ENCODE measurements at regions of chr7 and their contacts with region 1.

Region 1: DNA sequence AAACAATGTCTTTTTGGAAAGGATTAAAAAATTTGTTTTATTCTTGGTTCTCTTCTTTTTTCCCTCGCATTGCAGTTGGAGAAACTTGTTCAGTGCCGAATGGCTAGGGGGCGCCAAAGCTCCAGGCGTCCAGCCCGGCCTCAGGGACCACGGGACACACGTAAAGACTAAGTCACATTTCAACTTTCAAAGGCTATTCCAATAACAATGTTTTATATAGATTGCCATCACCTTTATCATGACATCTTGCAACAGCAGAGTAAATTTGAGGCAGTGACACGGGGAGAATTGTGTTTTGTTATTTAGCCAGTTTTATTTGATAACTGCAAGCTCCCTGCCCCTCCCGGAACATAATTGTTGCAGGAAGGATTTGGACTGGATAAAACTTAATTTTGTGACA is 2.2 kb upstream of the IGFBP3 start:
- DNase-seq: peak; percentile 73
- H3K4me3 ChIP-seq: peak overlapping the region in 1 of 3 experiments; percentile 52
- H3K27ac ChIP-seq: no peak overlapping the region
- H3K4me1 ChIP-seq: peaks cover 28% of the 10 kb centered on the region
- H3K27me3 ChIP-seq: peaks cover 31 to 51% of the 10 kb centered on the region in 2 experiments
- CTCF ChIP-seq: peak; percentile 88 to 89
- POLR2A ChIP-seq: no peak

Region 2: GRCh38 chr7:45938626-45939302 is 15.5 kb after region 1 on chr7:
- CTCF ChIA-PET with region 1: interaction called, 12 read pairs
- POLR2A ChIA-PET with region 1: no interaction called
- dilution Hi-C with region 1: no loop called
- intact Hi-C with region 1: no loop called
- DNase-seq: no peak
- H3K4me3 ChIP-seq: no peak overlapping the region
- H3K27ac ChIP-seq: no peak overlapping the region
- H3K4me1 ChIP-seq: no peaks in the 10 kb centered on the region
- H3K27me3 ChIP-seq: no peaks in the 10 kb centered on the region
- CTCF ChIP-seq: peak in 1 of 2 donors; percentile 16
- POLR2A ChIP-seq: no peak

Region 3: DNA sequence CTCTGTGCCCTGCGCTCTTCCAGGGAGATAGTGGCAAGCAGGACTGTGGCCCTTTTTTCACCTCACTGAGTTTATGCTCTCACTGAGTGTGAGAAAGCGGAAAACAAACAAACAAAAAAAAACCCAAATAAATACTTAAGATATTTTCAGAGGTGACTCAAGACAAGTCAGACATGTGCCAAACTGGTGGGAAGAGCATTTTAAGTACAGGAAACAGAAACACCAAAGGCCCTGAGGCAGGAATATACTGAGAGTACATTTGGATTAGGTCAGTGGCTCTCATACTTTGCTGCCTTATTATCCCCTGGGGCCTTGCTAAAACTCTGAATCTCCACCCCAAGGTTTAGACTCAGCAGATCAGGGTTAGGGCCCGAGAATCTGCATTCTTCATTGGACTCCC is 109.7 kb after region 1 on chr7:
- CTCF ChIA-PET with region 1: no interaction called
- POLR2A ChIA-PET with region 1: no interaction called
- dilution Hi-C with region 1: no loop called
- intact Hi-C with region 1: no loop called
- DNase-seq: no peak
- H3K4me3 ChIP-seq: no peak overlapping the region
- H3K27ac ChIP-seq: no peak overlapping the region
- H3K4me1 ChIP-seq: no peaks in the 10 kb centered on the region
- H3K27me3 ChIP-seq: no peaks in the 10 kb centered on the region
- CTCF ChIP-seq: no peak
- POLR2A ChIP-seq: no peak

Region 4: DNA sequence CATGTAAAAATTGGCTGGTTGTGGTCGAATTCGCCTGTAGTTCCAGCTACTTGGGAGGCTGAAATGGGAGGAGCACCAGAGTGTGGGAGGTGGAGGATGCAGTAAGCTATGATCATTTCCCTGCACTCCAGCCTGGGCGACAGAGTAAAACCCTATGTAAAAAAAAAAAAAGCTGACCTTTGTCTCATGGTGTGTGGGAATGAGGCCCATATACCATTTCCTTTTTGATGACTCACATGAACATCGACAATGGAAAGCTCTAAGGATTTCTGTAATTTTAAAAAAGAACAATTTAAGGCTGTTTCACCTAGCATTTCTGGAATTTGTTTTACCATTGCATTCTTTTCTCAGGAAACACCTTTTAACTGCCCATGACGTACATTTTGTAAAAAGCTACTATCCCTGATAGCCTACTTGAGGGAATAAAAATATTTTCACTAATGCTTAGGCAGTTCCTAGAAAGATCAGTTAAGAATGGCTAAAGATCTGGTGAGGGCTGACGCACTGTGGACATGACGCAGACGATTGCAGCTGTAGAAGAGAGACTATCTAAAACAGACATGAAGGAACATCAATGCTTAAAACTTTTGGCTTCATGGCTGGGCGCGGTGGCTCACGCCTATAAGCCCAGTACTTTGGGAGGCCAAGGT is 398.4 kb after region 1 on chr7:
- CTCF ChIA-PET with region 1: interaction called, 12 read pairs
- POLR2A ChIA-PET with region 1: no interaction called
- dilution Hi-C with region 1: no loop called
- intact Hi-C with region 1: no loop called
- DNase-seq: peak; percentile 94
- H3K4me3 ChIP-seq: no peak overlapping the region
- H3K27ac ChIP-seq: peak overlapping the region; percentile 58
- H3K4me1 ChIP-seq: no peaks in the 10 kb centered on the region
- H3K27me3 ChIP-seq: no peaks in the 10 kb centered on the region
- CTCF ChIP-seq: no peak
- POLR2A ChIP-seq: no peak

Region 5: DNA sequence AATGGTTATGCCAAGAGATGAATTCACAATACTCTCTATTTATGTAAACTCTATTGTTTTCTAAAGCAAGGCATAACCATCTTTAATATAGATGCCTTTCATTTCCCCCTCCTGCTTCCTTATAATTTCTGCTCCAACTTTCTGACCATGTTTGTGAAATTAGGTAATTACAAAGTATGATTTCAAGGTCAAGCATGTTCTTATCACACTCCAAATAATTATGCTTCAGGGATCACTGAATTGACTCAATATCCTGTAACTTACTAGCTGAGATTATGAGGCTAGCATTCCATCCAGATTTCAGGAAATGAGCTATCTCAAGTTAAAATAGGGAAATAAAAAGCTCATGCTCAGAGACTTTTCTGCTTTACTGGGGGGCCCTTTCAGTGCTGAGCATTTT is 653.7 kb after region 1 on chr7:
- CTCF ChIA-PET with region 1: interaction called, 8 read pairs
- POLR2A ChIA-PET with region 1: no interaction called
- dilution Hi-C with region 1: no loop called
- intact Hi-C with region 1: loop called (anchors 5 kb)
- DNase-seq: peak; percentile 88
- H3K4me3 ChIP-seq: no peak overlapping the region
- H3K27ac ChIP-seq: peak overlapping the region; percentile 55
- H3K4me1 ChIP-seq: peaks cover 23% of the 10 kb centered on the region
- H3K27me3 ChIP-seq: no peaks in the 10 kb centered on the region
- CTCF ChIP-seq: no peak
- POLR2A ChIP-seq: peak; percentile 40

Region 6: DNA sequence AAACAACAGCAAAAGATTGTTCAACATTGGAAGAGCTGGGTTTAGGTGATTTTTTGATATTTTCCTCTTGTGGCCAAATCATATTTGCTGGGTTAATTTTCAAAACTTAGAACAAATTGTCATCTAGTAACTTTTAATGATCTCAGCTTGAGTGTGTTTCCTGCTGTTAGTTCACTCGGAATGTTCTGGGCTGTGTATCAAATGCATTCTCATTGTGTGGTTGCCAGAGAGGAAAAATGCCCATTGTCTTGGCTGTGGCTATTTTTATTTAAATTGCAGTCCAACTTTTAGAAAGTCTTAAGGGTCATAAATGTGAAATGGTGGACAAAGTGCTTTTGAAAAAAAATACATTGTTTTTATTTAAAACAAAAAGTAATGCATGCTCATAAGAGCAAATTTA is 1116.6 kb after region 1 on chr7:
- CTCF ChIA-PET with region 1: no interaction called
- POLR2A ChIA-PET with region 1: no interaction called
- dilution Hi-C with region 1: no loop called
- intact Hi-C with region 1: loop called (anchors 2 kb)
- DNase-seq: peak; percentile 97
- H3K4me3 ChIP-seq: no peak overlapping the region
- H3K27ac ChIP-seq: peak overlapping the region; percentile 61
- H3K4me1 ChIP-seq: peaks cover 24% of the 10 kb centered on the region
- H3K27me3 ChIP-seq: no peaks in the 10 kb centered on the region
- CTCF ChIP-seq: no peak
- POLR2A ChIP-seq: peak; percentile 32

Region 7: GRCh38 chr7:47100817-47101435 is 1177.6 kb after region 1 on chr7:
- CTCF ChIA-PET with region 1: interaction called, 99 read pairs
- POLR2A ChIA-PET with region 1: no interaction called
- dilution Hi-C with region 1: no loop called
- intact Hi-C with region 1: loop called (anchors 1 kb)
- DNase-seq: peak; percentile 73
- H3K4me3 ChIP-seq: no peak overlapping the region
- H3K27ac ChIP-seq: no peak overlapping the region
- H3K4me1 ChIP-seq: no peaks in the 10 kb centered on the region
- H3K27me3 ChIP-seq: no peaks in the 10 kb centered on the region
- CTCF ChIP-seq: peak; percentile 69 to 79
- POLR2A ChIP-seq: no peak

Region 8: DNA sequence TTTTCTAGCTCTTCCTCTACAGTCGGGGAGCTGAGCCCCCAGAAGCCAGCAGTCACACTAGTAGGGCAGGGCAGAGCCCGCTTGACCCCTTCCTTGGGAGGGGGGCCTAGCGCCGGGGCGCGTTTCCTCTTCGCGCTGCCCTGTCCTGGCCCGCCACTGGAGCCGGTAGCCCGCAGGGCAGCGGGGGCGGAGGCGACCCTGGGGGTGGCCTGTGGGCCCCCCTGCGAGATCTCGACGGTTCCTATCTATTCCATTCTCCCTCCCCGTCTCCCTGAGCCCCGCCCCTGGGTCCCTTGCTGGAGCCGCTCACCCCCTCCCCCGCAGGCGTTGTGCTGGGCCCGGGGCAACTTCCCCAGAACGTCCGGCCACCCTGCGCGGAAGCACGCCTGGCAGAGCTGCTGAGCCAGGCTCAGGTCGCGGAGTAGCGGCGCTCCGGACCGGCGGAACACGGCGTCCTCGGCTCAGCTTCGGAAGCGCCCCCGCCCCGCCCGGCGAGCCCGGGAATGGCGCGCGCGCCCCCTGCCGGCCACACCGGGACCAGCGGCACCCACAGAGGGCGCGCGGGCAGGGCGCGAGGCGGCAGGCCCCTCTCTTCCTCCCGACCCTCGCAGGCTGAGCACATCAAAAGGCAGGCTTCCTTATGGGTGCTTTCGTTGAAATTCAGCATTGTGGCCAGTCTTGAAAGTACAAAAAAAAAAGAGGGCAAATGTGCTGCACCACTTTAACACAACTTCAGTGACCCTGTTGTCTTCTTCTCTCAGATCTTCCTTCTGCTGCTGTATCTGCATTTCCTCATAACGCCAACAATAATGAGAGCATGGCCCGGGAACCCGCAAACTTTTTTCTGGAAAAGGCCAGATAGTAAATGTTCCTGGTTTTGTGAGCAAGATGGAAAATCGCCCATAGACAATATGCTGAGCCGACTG is 1331.1 kb after region 1 on chr7:
- CTCF ChIA-PET with region 1: interaction called, 24 read pairs
- POLR2A ChIA-PET with region 1: no interaction called
- dilution Hi-C with region 1: no loop called
- intact Hi-C with region 1: loop called (anchors 1 kb)
- DNase-seq: peak; percentile 55
- H3K4me3 ChIP-seq: peak overlapping the region; percentile 59 to 69 (median 68)
- H3K27ac ChIP-seq: peak overlapping the region; percentile 58
- H3K4me1 ChIP-seq: peaks cover 15% of the 10 kb centered on the region
- H3K27me3 ChIP-seq: peaks cover 0 to 1% of the 10 kb centered on the region in 2 experiments
- CTCF ChIP-seq: peak; percentile 64 to 90
- POLR2A ChIP-seq: no peak

Measured in endothelial cell of umbilical vein (primary cell).